Heart left ventricle (tissue), 16 donors: ENCODE measurements at regions of chr3 and their contacts with region 1.

Region 1: DNA sequence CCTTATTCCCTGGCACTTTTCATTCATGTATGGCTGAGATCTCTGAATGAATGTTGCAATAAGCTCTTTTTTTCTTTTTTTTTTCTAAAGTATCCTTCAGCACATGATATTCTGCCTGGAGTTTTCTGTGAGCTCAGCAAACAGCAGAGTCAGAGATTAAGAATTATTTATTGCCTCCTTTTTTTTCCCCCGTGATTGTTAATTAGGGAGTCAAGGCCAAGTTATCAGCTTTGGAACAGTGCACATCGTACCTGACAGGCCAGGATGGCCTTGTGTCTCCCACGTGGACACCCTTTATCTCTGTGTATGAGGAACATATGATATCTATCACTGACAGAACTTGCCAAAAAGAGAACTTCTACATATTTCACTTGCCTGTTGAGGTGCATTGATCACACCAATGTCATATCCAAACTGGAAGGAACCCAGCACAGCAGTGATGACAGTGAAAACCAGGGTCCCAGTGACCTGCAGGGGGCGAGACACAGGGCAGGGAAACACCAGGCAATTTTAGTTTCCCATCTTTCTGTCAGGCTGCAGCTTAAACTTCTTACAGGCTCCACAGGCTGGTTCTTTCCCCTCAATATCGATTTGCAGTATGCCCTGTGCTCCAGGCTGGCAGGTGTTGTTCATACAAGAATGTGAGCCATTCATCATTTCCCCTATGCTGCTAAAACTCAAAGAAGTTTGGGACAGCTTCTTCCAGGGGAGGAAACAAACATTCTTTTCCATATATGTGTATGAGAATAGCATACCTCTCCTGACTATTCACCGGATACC is 8.2 kb downstream of the SLC2A2 start:
- DNase-seq: no peak
- ATAC-seq: no peak
- H3K4me3 ChIP-seq: no peak overlapping the region
- H3K27ac ChIP-seq: no peak overlapping the region
- H3K4me1 ChIP-seq: no peaks in the 10 kb centered on the region
- H3K27me3 ChIP-seq: peaks cover 0 to 3% (median 0%) of the 10 kb centered on the region in 9 donors
- CTCF ChIP-seq: no peak
- POLR2A ChIP-seq: no peak

Region 2: DNA sequence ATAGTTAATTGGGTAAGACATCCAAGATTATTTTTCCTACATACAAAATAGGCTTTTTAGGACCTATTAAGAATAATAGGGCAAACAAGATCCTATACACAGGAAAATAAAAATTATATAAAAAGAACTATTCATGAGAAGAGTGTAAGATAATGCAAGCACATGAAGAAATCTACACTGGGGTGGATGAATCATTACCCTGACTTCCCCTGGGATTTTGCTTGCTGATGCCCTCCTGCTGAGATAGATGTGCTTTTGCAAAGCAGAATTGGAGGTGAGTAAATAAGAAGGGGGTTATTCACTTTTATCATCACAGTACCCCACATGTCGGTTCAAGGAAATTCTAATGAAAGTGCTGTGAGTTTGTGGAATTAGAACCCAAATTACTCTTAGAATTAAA is 40.4 kb before region 1 on chr3:
- intact Hi-C with region 1: no loop called
- DNase-seq: no peak
- ATAC-seq: no peak
- H3K4me3 ChIP-seq: no peak overlapping the region
- H3K27ac ChIP-seq: no peak overlapping the region
- H3K4me1 ChIP-seq: no peaks in the 10 kb centered on the region
- H3K27me3 ChIP-seq: no peaks in the 10 kb centered on the region
- CTCF ChIP-seq: no peak
- POLR2A ChIP-seq: no peak

Region 3: DNA sequence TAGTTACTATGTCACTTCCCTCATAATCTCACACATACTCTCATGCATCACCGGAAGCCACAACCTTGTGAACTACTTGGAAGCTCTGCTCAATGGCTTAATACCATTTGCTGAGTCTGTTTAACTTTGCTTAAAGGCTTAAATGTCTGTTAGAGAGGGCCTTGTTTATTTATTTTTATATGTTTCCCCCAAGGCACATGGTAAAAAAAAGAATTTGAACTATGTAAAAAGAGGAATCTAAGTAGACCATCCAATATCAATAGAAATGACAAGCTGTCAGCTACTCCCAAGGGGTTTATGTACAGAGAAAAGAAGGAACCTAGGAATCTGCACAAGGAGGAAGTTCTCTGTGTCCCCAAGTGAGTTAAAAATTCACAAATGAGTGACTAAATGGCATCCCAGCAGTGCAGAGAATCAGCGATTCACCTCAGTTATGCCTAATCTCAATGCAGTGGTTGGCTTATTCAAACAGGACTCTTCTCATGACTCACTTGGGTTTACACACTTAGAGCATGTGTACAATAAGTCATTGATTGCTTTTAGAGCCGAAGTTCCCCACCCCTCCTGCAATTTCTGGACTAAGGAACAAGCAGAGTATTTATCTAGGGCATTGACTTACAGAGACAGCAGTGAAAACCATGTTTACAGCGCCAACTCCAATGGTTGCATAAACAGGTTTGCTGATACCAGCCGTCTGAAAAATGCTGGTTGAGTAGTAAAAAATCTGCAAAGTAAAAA is 16.2 kb before region 1 on chr3:
- intact Hi-C with region 1: loop called in 1 of 10 experiments (anchors 2 kb)
- DNase-seq: no peak
- ATAC-seq: no peak
- H3K4me3 ChIP-seq: no peak overlapping the region
- H3K27ac ChIP-seq: no peak overlapping the region
- H3K4me1 ChIP-seq: peaks cover 0 to 9% (median 0%) of the 10 kb centered on the region in 12 donors
- H3K27me3 ChIP-seq: no peaks in the 10 kb centered on the region
- CTCF ChIP-seq: no peak
- POLR2A ChIP-seq: no peak